Endothelial cell of umbilical vein (primary cell): ENCODE measurements at regions of chr1 and their contacts with region 1.

Region 1: GRCh38 chr1:214584805-214585766 is 17.9 kb upstream of the CENPF start:
- DNase-seq: peak; percentile 77
- H3K4me3 ChIP-seq: no peak overlapping the region
- H3K27ac ChIP-seq: no peak overlapping the region
- H3K4me1 ChIP-seq: peaks cover 14% of the 10 kb centered on the region
- H3K27me3 ChIP-seq: no peaks in the 10 kb centered on the region
- CTCF ChIP-seq: peak; percentile 50 to 62
- POLR2A ChIP-seq: no peak

Region 2: DNA sequence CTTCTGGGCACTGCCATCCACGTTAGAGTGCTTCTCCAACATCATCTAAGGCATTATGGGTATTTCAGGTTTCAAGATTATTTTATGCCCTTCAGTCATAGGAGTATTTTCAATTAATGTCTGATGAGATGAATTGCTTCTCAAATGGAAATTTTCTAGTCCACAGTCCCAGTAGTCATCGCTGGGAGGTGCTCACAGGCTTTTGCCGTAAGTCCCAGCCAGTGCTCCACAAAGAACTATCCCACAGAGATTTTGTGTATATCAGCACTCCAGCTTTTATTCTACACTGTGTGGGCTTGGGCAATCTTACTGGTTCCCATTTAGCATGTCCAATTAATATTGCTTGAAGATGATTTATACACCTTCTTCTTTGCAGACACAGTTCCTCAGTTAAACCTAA is 243.2 kb before region 1 on chr1:
- CTCF ChIA-PET with region 1: interaction called, 359 read pairs
- POLR2A ChIA-PET with region 1: no interaction called
- dilution Hi-C with region 1: loop called (anchors 25 kb)
- intact Hi-C with region 1: no loop called
- DNase-seq: no peak
- H3K4me3 ChIP-seq: no peak overlapping the region
- H3K27ac ChIP-seq: no peak overlapping the region
- H3K4me1 ChIP-seq: no peaks in the 10 kb centered on the region
- H3K27me3 ChIP-seq: no peaks in the 10 kb centered on the region
- CTCF ChIP-seq: no peak
- POLR2A ChIP-seq: no peak

Region 3: GRCh38 chr1:214377886-214378285 is 207.2 kb before region 1 on chr1:
- CTCF ChIA-PET with region 1: interaction called, 17 read pairs
- POLR2A ChIA-PET with region 1: no interaction called
- dilution Hi-C with region 1: no loop called
- intact Hi-C with region 1: no loop called
- DNase-seq: peak; percentile 17
- H3K4me3 ChIP-seq: no peak overlapping the region
- H3K27ac ChIP-seq: no peak overlapping the region
- H3K4me1 ChIP-seq: no peaks in the 10 kb centered on the region
- H3K27me3 ChIP-seq: no peaks in the 10 kb centered on the region
- CTCF ChIP-seq: no peak
- POLR2A ChIP-seq: no peak

Region 4: GRCh38 chr1:214446772-214447556 is 138.1 kb before region 1 on chr1:
- CTCF ChIA-PET with region 1: no interaction called
- POLR2A ChIA-PET with region 1: no interaction called
- dilution Hi-C with region 1: no loop called
- intact Hi-C with region 1: loop called (anchors 5 kb)
- DNase-seq: peak; percentile 88
- H3K4me3 ChIP-seq: peak overlapping the region in 1 of 3 experiments; percentile 33
- H3K27ac ChIP-seq: peak overlapping the region; percentile 88
- H3K4me1 ChIP-seq: peaks cover 41% of the 10 kb centered on the region
- H3K27me3 ChIP-seq: no peaks in the 10 kb centered on the region
- CTCF ChIP-seq: no peak
- POLR2A ChIP-seq: peak; percentile 56

Region 5: GRCh38 chr1:214503553-214503952 is 81.5 kb before region 1 on chr1:
- CTCF ChIA-PET with region 1: no interaction called
- POLR2A ChIA-PET with region 1: no interaction called
- dilution Hi-C with region 1: no loop called
- intact Hi-C with region 1: no loop called
- DNase-seq: no peak
- H3K4me3 ChIP-seq: no peak overlapping the region
- H3K27ac ChIP-seq: no peak overlapping the region
- H3K4me1 ChIP-seq: peaks cover 9% of the 10 kb centered on the region
- H3K27me3 ChIP-seq: no peaks in the 10 kb centered on the region
- CTCF ChIP-seq: no peak
- POLR2A ChIP-seq: no peak

Region 6: DNA sequence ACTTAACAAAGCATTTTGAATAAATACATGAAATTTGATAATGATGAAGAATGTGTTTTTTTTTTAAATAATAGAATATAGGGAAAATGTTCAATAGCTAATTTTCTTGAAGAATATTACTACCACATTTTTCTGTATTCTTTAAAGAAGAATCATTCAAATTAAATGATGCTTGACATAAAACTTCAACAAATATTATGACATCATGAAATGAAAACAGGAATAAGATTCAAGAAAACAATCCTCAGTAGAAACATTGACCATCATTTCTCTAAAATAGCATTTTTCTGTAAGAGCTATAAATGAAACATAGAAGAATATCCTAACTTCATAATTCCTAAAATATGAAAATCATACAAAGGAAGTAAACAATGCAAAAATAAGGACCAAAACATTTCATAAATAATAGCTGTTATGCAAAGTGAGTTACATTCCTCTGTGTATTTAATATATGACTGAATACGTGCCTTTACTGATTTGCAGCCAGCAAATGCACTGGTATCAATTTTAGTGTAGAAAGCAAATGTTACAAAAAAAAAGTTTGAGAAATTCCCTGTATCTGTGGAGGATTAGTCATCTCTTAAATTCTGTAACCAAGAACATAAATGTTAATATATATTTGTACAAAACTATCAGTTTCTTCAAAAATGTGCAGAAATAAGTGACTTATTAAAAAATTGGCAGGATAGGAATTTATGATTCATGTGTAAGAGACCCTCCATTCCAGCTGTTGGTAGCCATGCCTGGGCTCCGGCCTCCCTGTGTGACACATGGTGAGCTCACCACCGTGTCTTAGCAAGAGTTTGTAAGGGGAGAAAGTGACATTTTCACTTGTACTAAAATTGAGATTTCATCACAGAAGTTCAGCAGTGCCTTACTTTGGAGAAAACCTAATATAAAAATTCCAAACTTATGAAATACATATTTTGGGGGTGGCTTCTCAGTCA is 18.7 kb before region 1 on chr1:
- CTCF ChIA-PET with region 1: interaction called, 17 read pairs
- POLR2A ChIA-PET with region 1: no interaction called
- dilution Hi-C with region 1: no loop called
- intact Hi-C with region 1: loop called (anchors 2 kb)
- DNase-seq: peak; percentile 67
- H3K4me3 ChIP-seq: no peak overlapping the region
- H3K27ac ChIP-seq: peak overlapping the region; percentile 33
- H3K4me1 ChIP-seq: peaks cover 48% of the 10 kb centered on the region
- H3K27me3 ChIP-seq: no peaks in the 10 kb centered on the region
- CTCF ChIP-seq: no peak
- POLR2A ChIP-seq: no peak